Activated T-helper 2 cell treated with anti-CD3 and anti-CD28 coated beads, Interferon-gamma antibody, Interleukin-2, Interleukin-4, amounts not matched to agents 10 μg/mL and 5 μg/mL and 100 μg/mL, durations not matched to agents 14 hours and 24 hours and 36 hours (primary cell): ENCODE measurements at regions of chr14 and their contacts with region 1.

Region 1: DNA sequence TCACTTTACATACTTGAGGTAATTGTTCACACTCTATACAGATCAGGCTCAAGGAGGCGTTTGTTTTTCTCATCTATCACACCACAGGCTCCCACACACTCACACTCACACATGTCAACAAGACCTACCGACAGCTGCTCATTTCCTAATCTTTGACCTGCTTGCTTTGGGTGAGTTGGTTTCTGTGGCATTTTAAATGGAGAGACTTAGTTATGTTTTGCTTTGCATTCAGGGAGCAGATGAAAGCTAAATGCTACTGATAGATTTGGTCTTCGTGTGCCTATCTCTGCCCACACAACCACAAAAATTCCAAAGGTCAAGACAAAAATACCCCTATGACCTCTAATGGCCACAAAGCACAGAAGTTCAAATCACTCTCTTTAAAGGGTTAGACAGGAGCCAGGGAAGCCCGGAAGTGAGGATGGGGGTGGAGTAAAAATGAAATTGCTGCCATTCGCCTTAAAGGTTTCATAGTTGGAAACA is 203.5 kb upstream of the G2E3 start:
- DNase-seq: no peak
- H3K4me3 Mint-ChIP-seq: no peak overlapping the region
- H3K27ac Mint-ChIP-seq: peak overlapping the region; percentile 81
- H3K4me1 Mint-ChIP-seq: peaks cover 25% of the 10 kb centered on the region
- H3K27me3 Mint-ChIP-seq: peaks cover under 1% of the 10 kb centered on the region

Region 2: GRCh38 chr14:30330445-30330844 is 25.0 kb before region 1 on chr14:
- intact Hi-C with region 1: loop called (anchors 1 kb)
- DNase-seq: no peak
- H3K4me3 Mint-ChIP-seq: no peak overlapping the region
- H3K27ac Mint-ChIP-seq: no peak overlapping the region
- H3K4me1 Mint-ChIP-seq: peaks cover 18% of the 10 kb centered on the region
- H3K27me3 Mint-ChIP-seq: no peaks in the 10 kb centered on the region

Region 3: DNA sequence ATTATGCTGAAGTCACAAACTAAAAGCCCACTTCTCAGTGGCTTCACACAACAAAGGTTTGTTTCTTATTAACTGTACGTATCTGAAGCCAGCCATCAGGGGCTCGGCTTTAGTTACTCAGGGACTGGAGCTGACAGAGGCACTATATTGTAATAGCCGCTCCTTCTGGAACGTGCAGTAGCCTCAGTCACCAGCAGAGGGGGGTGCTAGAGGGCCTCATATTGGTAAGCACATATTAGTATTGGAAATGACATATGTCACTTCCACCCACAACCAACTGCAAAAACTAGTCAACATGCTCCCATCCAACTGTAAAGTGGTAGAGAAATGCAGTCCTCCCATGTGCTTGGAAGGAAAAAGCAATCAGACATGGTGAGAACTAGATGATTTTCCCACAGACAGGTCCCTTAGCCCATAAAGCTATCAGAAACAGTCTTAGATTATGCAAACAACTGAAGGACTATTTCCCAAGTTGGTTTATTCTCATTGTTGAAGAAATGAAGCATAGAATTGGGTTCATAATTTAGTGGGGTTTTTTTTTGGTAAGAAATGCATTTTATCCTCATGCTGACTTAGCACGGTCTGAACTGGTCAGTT is 19.9 kb after region 1 on chr14:
- intact Hi-C with region 1: loop called (anchors 2 kb)
- DNase-seq: peak; percentile 40
- H3K4me3 Mint-ChIP-seq: no peak overlapping the region
- H3K27ac Mint-ChIP-seq: no peak overlapping the region
- H3K4me1 Mint-ChIP-seq: no peaks in the 10 kb centered on the region
- H3K27me3 Mint-ChIP-seq: peaks cover 17% of the 10 kb centered on the region